Activated CD4-positive, alpha-beta memory T cell treated with anti-CD3 and anti-CD28 coated beads, Interleukin-2, amount 10 ng/mL, durations not matched to agents 7 days and 5 days (primary cell): ENCODE measurements at regions of chr10 and their contacts with region 1.

Region 1: DNA sequence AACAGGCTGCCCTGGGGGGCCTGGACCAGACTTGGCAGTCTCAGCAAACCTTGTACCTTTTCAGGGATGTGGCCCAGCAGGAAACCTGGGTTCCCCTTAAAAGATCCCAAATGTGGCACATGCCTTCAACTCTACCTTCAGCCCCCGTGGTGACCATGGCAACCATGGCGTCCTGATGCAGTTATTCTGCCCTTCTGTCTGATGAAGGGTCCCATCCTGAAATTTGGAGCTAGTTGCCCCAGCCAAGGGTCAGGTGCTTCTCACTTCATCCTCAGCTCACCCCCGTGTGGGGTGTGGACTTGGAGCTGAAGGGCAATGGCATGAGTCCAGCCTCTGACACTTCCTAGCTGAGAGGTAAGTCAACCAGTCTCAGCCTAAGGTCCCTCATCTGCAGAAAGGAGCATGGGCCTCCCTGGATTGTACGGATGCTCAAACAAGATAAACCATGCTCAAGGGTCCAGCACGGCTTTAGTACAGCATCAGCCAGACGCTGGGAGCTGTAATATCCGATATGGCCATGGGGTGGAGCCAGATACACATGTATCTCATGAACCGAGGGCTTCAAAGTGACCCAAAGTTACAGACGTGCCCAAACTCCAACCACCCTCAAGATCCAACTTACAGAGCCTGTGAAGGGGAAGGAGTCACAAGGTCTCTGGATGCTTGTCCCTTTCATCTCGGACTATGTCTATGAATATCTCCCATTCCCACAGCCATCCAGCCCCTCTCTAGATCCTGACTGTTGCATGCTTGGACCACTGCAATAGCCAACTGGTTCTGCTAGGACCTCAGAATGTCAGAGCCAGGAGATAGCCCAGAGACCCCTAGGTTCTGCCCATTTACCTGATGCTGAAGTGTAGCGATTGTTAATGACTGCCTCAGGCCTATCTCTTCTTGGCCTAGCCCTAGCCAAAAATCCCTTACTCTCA is 142.5 kb downstream of the SH3PXD2A start:
- DNase-seq: peak; percentile 86
- H3K4me3 Mint-ChIP-seq: no peak overlapping the region
- H3K27ac Mint-ChIP-seq: no peak overlapping the region
- H3K4me1 Mint-ChIP-seq: peaks cover 14% of the 10 kb centered on the region
- H3K27me3 Mint-ChIP-seq: no peaks in the 10 kb centered on the region

Region 2: DNA sequence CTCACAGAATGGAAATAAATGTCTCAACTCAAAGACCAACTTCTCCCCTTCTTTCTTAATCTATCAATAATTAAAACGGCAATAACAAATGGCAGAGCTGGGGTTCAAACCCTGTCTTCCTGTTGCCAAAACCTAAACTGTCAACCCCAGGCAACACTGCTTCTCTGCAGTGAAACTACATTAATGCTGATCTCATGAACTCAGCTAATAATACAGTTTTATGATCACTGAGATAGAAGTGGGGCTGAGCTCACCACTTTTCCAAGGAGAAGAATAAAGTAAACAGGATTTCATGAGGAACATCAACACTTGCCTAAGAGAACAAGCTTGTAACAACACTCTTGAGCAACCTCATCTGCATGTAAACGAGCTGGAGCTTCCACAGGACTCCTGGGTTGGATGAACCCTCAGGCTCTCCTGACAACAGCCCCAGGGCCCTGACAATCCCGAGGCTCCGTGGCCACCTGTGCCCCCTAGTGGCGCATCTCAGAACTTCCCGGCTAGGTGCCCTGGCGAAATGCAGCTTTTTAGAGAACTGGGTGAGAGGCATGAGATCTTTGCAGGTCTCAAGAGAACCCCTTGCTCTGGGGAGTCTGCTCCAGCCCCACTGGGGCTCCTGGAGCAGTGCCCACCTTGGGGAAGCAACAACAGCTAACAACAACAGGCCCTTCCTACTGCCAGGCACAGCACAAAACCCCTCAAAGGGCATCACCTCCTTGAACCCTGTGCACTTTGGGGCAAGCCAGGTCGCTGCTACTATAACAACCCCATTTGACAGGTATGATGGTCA is 26.8 kb before region 1 on chr10:
- CTCF ChIA-PET with region 1: interaction called, 10 read pairs
- POLR2A ChIA-PET with region 1: no interaction called
- DNase-seq: peak; percentile 80
- H3K4me3 Mint-ChIP-seq: no peak overlapping the region
- H3K27ac Mint-ChIP-seq: no peak overlapping the region
- H3K4me1 Mint-ChIP-seq: peaks cover 13% of the 10 kb centered on the region
- H3K27me3 Mint-ChIP-seq: no peaks in the 10 kb centered on the region

Region 3: DNA sequence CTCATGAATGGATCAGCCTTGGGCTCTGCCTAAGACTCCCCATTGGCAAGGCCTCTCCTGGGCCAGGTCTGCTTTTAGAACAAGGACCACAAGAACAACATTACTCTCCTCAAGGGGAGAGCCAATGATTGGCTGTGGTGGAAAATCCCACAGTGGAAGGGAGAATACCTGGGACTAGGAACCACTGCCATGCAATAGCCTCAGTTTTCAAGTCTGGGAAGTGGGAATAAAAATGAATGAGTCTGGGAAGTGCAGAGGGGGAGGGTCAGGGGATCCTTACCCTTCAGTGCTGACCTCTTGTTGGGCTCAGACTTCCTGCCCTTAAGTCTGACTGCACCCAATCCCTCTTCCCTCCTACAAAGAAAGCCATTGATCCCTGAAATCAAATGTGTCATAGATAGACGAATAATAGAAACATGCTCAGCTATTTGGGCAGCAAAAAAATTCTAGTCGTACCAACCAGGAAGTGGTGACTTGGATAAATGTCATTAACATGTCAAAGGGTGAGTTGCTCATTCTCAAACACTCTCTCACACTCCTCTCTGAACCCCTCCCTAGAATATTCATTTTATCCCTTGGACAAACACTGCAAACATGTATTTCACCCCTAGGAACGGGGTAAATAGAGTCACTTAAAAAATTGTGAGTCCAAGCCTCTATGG is 18.9 kb after region 1 on chr10:
- CTCF ChIA-PET with region 1: interaction called, 16 read pairs
- POLR2A ChIA-PET with region 1: no interaction called
- DNase-seq: no peak
- H3K4me3 Mint-ChIP-seq: no peak overlapping the region
- H3K27ac Mint-ChIP-seq: no peak overlapping the region
- H3K4me1 Mint-ChIP-seq: peaks cover 14% of the 10 kb centered on the region
- H3K27me3 Mint-ChIP-seq: no peaks in the 10 kb centered on the region

Region 4: DNA sequence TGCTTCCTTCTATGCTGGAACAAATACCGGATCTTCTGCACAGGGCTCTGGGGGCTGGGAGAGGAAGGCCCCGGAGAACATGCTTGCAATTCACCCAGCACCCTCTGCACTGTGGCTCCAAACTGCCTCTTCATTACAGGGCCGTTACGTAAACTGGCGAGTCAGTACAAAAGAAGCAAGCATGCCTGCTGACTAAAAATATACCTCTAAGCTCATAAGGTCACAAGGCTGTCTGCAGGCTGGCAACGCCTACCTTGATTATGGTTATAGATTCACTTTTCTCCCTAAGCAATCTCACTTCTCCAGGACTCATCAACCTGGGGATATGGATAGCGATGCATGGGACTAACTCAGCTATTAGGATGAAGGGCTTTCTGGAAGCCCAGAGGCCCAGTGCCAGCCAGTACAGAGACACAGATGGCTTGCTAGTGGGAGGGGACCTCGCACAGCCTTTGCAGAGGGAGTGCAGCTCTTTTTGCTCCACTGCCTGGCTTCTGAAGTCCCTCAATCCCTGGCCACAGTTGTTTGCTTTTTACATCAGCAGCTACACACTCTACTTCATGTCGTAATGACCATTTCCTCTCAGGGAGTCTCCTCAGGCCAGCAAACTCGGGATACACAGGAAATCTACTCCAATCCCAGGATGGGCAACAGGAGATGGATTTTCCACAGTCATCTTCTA is 46.4 kb after region 1 on chr10:
- CTCF ChIA-PET with region 1: interaction called, 13 read pairs
- POLR2A ChIA-PET with region 1: no interaction called
- DNase-seq: peak; percentile 51
- H3K4me3 Mint-ChIP-seq: no peak overlapping the region
- H3K27ac Mint-ChIP-seq: peak overlapping the region; percentile 75
- H3K4me1 Mint-ChIP-seq: peaks cover 67% of the 10 kb centered on the region
- H3K27me3 Mint-ChIP-seq: no peaks in the 10 kb centered on the region

Region 5: DNA sequence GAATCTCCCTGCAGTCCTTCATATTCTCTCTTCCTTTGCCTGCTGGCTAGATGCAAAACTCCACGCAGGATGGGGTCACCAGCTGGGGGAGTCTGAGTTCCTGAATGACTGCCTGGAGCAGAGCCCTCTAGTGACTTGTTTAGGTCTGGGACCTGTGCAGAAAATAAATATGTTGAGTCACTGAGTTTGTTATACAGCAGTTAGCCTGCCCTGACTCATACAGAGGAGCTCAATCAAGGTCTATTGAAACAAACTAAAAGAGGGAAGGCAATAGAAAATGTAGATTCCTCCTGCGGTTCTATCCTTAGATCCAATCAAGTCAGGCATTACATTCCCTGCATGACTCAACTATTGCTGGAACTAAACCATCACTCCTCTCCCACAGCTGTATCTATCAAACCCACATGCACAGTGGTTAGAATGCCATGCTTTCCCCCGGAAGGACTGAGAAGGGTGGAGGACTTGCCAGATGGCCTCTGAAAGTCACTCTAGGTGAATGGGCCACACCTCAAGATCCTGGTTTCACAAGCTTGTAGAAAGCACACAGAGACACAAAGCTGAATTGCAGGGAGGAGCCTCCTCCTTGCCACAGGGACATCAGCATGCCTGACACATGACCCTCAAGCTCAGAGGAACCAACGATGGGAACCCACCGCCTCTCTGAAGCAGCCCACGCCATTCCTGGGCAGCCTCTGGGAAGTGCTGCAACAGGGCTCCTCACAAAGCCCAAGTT is 68.7 kb after region 1 on chr10:
- CTCF ChIA-PET with region 1: interaction called, 26 read pairs
- POLR2A ChIA-PET with region 1: interaction called, 8 read pairs
- DNase-seq: peak; percentile 36
- H3K4me3 Mint-ChIP-seq: no peak overlapping the region
- H3K27ac Mint-ChIP-seq: peak overlapping the region; percentile 73
- H3K4me1 Mint-ChIP-seq: peaks cover 29% of the 10 kb centered on the region
- H3K27me3 Mint-ChIP-seq: peaks cover 10% of the 10 kb centered on the region

Region 6: DNA sequence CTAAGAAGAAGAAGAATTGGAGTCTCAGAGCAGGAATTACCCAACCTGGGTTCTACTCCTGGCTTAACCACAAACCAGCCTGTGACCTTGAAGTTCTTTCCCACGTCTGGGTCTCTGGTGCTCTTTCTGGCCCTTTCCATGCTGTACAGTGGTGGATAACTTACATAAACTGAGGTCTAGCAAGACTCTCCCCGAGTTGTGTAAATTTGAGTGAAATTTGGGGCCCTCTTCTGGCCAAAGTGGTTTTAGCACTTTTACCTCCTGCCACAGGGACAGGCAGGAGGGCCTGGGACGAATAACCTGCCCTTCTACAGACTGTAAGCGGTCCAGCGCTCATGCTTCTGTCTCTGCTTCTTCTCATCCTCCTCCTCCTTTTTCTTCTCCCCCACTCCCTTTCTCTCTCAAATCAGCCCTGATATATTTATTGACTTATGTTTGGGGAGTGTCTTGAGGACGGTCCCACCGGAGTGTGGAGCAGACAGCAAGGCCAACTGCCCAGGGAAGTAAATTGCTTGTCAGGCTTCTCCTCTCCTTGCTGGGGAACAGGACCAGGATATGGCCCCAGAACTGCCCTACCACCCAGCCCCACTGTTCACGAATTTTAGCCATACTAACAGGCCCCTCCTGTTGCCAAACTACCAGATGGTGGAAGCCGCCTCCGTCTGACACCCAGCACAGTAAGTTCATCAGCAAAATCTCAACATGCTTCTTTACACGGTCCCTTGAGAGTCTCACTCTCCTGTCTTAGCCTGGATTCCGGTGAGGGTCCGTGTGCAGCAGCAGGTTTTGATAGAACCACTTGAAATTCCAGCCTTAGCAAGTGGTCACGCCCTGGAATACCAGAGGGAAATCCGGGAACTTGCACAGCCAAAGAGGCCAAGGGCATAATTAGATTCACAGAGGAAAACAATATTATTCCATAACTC is 146.6 kb after region 1 on chr10:
- CTCF ChIA-PET with region 1: interaction called, 78 read pairs
- POLR2A ChIA-PET with region 1: interaction called, 5 read pairs
- DNase-seq: peak; percentile 73
- H3K4me3 Mint-ChIP-seq: no peak overlapping the region
- H3K27ac Mint-ChIP-seq: no peak overlapping the region
- H3K4me1 Mint-ChIP-seq: peaks cover 8% of the 10 kb centered on the region
- H3K27me3 Mint-ChIP-seq: peaks cover 33% of the 10 kb centered on the region

Region 7: DNA sequence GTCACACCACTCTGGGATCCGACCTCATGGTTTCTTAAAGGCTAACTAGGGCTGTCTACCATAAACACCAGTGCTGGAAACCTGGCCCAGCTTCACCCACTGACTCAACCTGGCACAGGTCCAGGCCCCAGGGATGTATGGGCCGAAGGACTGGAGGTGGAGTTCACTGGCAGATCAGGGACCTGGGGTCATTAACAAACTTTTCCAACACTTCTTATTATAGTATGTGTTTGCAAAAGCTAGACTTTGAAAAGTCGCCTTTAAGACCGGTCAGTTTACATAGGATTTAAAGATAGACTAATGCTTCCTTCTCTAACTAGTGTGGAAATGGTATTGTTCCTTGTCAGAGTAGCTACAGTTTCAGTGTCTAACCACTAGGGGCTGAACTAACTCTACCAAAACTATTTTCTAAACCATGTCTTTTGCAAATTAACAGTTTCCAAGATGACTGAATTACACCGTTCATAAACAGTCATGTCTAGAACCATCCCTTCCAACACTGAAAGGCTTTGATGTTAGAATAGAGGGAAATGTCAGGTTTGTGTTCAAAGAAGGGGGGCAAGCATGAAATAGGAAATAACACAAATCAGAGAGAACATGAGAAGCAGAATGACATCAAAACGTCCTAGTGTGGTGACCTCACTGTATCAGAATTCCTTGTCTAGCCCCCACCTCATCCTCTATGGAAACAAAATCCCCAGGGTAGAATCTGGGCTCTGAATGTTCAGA is 175.4 kb after region 1 on chr10:
- CTCF ChIA-PET with region 1: interaction called, 76 read pairs
- POLR2A ChIA-PET with region 1: interaction called, 3 read pairs
- DNase-seq: no peak
- H3K4me3 Mint-ChIP-seq: no peak overlapping the region
- H3K27ac Mint-ChIP-seq: peak overlapping the region; percentile 54
- H3K4me1 Mint-ChIP-seq: peaks cover 47% of the 10 kb centered on the region
- H3K27me3 Mint-ChIP-seq: no peaks in the 10 kb centered on the region

Region 8: GRCh38 chr10:104054430-104054829 is 341.6 kb after region 1 on chr10:
- CTCF ChIA-PET with region 1: no interaction called
- POLR2A ChIA-PET with region 1: no interaction called
- DNase-seq: no peak
- H3K4me3 Mint-ChIP-seq: no peak overlapping the region
- H3K27ac Mint-ChIP-seq: no peak overlapping the region
- H3K4me1 Mint-ChIP-seq: peaks cover 4% of the 10 kb centered on the region
- H3K27me3 Mint-ChIP-seq: no peaks in the 10 kb centered on the region